ENCODE measurements at regions of chr20 and their contacts with region 1.

Region 1: DNA sequence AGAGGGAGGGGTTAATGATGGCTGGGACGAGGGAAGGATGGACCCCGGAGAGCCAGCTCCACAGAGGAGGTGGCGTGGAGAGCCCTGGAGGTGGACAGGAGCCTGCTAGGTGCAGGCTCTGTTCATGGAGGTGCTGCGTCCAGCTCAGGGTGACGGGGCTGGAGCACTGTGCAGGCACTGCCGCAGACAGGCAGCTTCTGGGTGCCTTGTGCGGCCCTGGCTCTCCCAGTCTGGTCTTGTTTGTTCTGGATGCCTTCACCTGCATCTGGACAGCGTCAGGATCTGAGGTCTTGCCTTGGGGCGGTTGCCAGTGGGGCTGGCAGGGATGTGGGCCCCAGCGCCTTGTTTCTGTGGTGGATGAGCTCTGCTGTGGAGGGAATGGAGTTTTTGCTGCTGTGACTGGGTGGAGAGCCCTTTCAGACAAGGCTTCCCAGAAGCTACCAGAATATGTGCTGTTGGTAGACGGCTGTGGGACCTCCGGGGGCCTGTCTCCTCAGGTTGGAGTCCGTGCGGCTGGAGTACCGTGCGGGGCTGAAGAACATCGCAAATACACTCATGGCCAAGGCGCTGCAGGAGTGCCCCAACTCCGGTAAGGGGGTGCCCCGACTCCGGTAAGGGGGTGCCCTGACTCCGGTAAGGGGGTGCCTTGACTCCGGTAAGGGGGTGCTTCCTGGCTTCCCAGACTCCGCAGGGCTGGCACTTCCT is 7.8 kb upstream of the C20orf204 start:
- DNase-seq: no peak
- ATAC-seq: no peak
- H3K4me3 Mint-ChIP-seq: no peak overlapping the region
- H3K27ac Mint-ChIP-seq: no peak overlapping the region
- H3K4me1 Mint-ChIP-seq: no peaks in the 10 kb centered on the region
- H3K27me3 Mint-ChIP-seq: no peaks in the 10 kb centered on the region

Region 2: DNA sequence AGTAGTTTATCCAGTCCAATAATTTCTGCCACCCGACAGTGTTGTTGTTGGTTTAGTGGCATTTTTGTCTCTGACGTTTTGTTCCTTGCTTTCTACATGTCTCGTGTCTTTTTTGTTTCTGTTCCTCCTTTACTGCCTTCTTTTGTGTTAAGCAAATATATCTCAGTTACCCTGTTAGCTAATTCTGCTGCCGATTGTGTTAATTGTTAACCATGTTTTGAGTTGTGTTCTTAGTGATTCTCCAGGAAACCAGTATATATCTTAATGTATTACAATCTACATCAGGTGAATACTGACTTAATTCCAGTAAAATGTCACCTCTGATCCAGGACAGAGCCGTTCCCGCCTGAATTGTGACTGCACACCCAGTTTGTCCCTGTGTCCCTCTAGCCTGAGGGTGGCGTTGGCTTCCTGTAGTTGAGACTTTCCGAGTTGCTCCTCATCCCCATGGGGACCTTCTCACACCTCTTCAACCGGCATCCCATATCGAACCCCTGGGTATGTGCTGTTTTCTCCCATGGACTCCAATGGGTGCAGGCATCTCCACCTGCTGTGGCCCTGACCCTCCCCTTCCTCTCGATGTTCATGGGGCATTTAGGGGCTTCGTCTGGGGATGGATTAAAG is 985.6 kb before region 1 on chr20:
- CTCF ChIA-PET with region 1: no interaction called
- POLR2A ChIA-PET with region 1: interaction called, 11 read pairs
- intact Hi-C with region 1: no loop called
- DNase-seq: no peak
- ATAC-seq: no peak
- H3K4me3 Mint-ChIP-seq: no peak overlapping the region
- H3K27ac Mint-ChIP-seq: no peak overlapping the region
- H3K4me1 Mint-ChIP-seq: no peaks in the 10 kb centered on the region
- H3K27me3 Mint-ChIP-seq: peaks cover 20% of the 10 kb centered on the region

Region 3: GRCh38 chr20:63819224-63819921 is 208.8 kb before region 1 on chr20:
- CTCF ChIA-PET with region 1: no interaction called
- POLR2A ChIA-PET with region 1: no interaction called
- intact Hi-C with region 1: no loop called
- DNase-seq: no peak
- ATAC-seq: no peak
- H3K4me3 Mint-ChIP-seq: peak overlapping the region; percentile 15
- H3K27ac Mint-ChIP-seq: no peak overlapping the region
- H3K4me1 Mint-ChIP-seq: no peaks in the 10 kb centered on the region
- H3K27me3 Mint-ChIP-seq: peaks cover 9% of the 10 kb centered on the region

Measured in activated CD4-positive, alpha-beta T cell treated with anti-CD3 and anti-CD28 coated beads for 36 hours (primary cell).